Mucosa of descending colon (tissue), 3 donors: ENCODE measurements at regions of chr16 and their contacts with region 1.

Region 1: GRCh38 chr16:55711959-55712876 is 56.4 kb downstream of the SLC6A2 start:
- DNase-seq: peak in 2 of 3 donors; percentile 42 to 85
- ATAC-seq: peak; percentile 52
- H3K4me3 ChIP-seq: no peak overlapping the region
- H3K4me1 ChIP-seq: no peaks in the 10 kb centered on the region
- CTCF ChIP-seq: no peak

Region 2: GRCh38 chr16:55756963-55757362 is 44.7 kb after region 1 on chr16:
- intact Hi-C with region 1: no loop called
- DNase-seq: no peak
- ATAC-seq: no peak
- H3K4me3 ChIP-seq: no peak overlapping the region
- H3K4me1 ChIP-seq: no peaks in the 10 kb centered on the region
- CTCF ChIP-seq: no peak

Region 3: GRCh38 chr16:55842369-55843104 is 130.3 kb after region 1 on chr16:
- intact Hi-C with region 1: loop called (anchors 2 to 5 kb)
- DNase-seq: peak in 1 of 3 donors; percentile 39
- ATAC-seq: peak; percentile 45
- H3K4me3 ChIP-seq: no peak overlapping the region
- H3K4me1 ChIP-seq: no peaks in the 10 kb centered on the region
- CTCF ChIP-seq: peak; percentile 36